Transverse colon (tissue), 4 donors: ENCODE measurements at regions of chr6 and their contacts with region 1.

Region 1: DNA sequence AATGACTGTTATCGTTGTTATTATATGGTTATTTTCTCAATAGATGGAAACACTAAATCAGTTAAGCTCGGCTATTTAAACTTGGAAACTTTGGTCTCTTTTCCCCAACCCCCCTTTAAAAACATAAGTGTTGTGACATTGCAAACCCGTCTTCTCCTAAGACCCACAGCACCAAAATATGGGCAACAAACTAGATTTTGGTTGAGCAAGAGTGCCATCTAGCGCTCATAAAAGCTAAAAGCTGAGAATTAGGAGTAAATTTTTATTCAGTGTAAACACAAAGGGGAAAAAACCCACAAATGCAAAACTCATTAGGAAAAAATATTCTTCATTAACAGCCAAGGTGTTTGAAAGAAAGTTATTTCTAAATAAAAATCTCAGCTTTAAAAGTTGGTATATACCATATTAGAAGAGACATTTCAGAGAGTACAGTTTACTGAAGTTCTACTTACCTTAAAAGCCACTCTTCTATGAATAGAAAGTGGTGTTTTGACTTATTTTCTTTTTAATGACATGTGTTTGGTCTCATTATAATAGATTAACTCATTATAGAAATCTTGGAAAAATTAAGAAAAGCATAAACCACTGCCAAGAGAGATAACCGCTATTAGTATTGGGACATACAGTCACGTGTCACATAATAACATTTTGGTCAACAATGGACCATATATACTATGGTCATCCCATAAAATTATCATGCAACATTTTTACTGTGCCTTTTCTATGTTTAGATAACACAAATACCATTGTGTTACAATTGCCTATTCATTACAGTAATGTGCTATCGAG is 21.1 kb downstream of the SESN1 start:
- DNase-seq: no peak
- H3K4me3 ChIP-seq: no peak overlapping the region
- H3K27ac ChIP-seq: no peak overlapping the region
- H3K4me1 ChIP-seq: peaks cover 9 to 51% (median 23%) of the 10 kb centered on the region in 4 donors
- H3K27me3 ChIP-seq: no peaks in the 10 kb centered on the region
- CTCF ChIP-seq: peak; percentile 60 to 75 (median 62)
- EP300 ChIP-seq: no peak
- POLR2A ChIP-seq: no peak

Region 2: GRCh38 chr6:108549732-108550131 is 523.8 kb before region 1 on chr6:
- in situ Hi-C with region 1: loop called (anchors 5 to 10 kb)
- intact Hi-C with region 1: loop called (anchors 10 kb)
- DNase-seq: no peak
- H3K4me3 ChIP-seq: no peak overlapping the region
- H3K27ac ChIP-seq: no peak overlapping the region
- H3K4me1 ChIP-seq: no peaks in the 10 kb centered on the region
- H3K27me3 ChIP-seq: no peaks in the 10 kb centered on the region
- CTCF ChIP-seq: no peak
- EP300 ChIP-seq: no peak
- POLR2A ChIP-seq: no peak

Region 3: DNA sequence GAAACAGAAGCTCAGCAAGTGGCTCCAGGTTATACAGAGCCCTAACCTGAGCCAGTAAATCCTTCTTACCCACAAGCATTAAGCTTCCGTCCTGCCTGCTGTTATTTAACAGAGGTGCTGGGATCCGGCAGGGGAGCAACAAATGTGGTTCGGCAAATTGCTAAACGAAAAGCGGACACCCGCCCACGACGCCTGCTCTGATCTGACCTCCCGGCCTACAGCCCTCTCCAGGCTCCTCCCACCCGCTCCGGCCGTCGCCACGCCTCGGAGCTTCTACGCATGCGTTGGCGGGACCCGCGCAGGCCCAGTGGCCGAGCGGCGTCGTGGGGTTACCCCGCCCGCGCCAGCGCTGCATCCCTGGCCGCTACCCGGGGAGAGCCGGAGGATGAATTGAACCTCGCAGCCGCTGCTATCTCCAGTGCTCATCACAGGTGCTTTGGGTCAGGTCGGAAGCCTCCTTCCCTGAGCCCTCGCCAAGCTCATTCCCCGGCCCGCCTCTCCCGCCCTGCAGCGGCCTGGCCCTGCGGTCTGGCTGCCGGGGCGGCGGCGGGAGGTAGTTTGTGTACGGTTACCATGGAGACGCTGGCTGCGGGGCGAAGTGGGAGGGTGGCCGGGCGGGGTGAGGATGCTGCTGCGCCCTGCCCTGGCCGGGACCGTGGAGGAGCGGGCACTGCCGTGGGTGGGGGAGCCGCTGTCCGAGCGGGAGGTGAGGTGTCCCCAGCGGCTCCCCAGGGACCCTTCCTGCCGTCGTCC is 225.2 kb before region 1 on chr6 and contains the start of gene ARMC2:
- in situ Hi-C with region 1: loop called in 1 of 4 experiments (anchors 25 kb)
- intact Hi-C with region 1: no loop called
- DNase-seq: peak; percentile 95
- H3K4me3 ChIP-seq: peak within 1 kb of the TSS; percentile 36 to 57 (median 52)
- H3K27ac ChIP-seq: peak within 1 kb of the TSS; percentile 65 to 84 (median 80)
- H3K4me1 ChIP-seq: peaks cover 0 to 22% (median 15%) of the 10 kb centered on the region in 4 donors
- H3K27me3 ChIP-seq: no peaks in the 10 kb centered on the region
- CTCF ChIP-seq: no peak
- EP300 ChIP-seq: no peak
- POLR2A ChIP-seq: peak; percentile 62
- total RNA-seq, gene ARMC2: 2.0 to 7.5 (median 3.0) TPM

Region 4: DNA sequence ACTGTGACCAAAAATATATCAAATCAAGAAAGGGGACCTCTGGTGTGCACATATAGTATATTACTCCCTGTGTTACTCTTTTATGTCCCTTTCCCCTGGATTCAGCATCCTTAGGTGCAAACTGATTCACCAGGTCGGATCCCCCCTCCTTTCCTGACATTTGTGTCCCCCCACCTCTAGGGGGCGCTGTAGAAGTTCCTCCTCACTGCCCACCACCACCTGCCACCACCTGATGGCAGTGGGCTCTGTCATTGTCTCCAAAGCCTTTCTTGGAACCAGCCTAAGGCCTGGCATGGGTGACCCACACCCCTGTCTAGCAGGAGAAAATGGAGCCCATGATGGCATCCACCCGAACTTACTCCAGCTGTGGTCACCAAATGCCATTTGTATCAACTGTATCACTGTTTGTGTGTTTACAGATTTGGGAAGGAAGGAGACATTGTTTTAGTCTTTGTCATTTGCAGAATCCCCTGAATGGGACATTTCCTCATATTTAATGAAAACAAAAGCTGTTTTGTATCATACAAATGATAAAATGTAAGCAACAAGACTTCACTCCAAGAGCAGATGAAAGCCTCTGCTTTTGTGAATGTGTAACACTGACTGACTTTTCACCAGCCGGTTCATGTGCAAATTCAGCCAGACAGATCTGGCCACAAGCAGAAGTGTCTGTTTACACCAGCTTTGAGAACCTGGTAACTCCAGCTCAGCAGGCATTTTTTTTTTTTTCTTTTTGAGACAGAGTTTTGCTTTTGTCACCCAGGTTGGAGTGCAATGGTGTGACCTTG is 159.1 kb before region 1 on chr6:
- in situ Hi-C with region 1: loop called in 1 of 4 experiments (anchors 25 kb)
- intact Hi-C with region 1: no loop called
- DNase-seq: no peak
- H3K4me3 ChIP-seq: no peak overlapping the region
- H3K27ac ChIP-seq: peak overlapping the region in 1 of 4 donors; percentile 3
- H3K4me1 ChIP-seq: peaks cover 0 to 4% (median 0%) of the 10 kb centered on the region in 4 donors
- H3K27me3 ChIP-seq: no peaks in the 10 kb centered on the region
- CTCF ChIP-seq: peak; percentile 22 to 37 (median 32)
- EP300 ChIP-seq: no peak
- POLR2A ChIP-seq: no peak

Region 5: GRCh38 chr6:109304284-109305015 is 230.9 kb after region 1 on chr6:
- in situ Hi-C with region 1: no loop called
- intact Hi-C with region 1: no loop called
- DNase-seq: no peak
- H3K4me3 ChIP-seq: no peak overlapping the region
- H3K27ac ChIP-seq: peak overlapping the region in 2 of 4 donors; percentile 34 to 37
- H3K4me1 ChIP-seq: peaks cover 0 to 34% (median 17%) of the 10 kb centered on the region in 4 donors
- H3K27me3 ChIP-seq: no peaks in the 10 kb centered on the region
- CTCF ChIP-seq: no peak
- EP300 ChIP-seq: no peak
- POLR2A ChIP-seq: no peak